MCF 10A (cell line): ENCODE measurements at regions of chr1 and their contacts with region 1.

Region 1: GRCh38 chr1:45359882-45360513 is 19.8 kb upstream of the MUTYH start:
- DNase-seq: peak; percentile 70
- H3K4me3 Mint-ChIP-seq: no peak overlapping the region
- H3K27ac Mint-ChIP-seq: no peak overlapping the region
- H3K4me1 Mint-ChIP-seq: peaks cover 15% of the 10 kb centered on the region
- H3K27me3 Mint-ChIP-seq: no peaks in the 10 kb centered on the region
- CTCF ChIP-seq: peak; percentile 64

Region 2: GRCh38 chr1:45339789-45340570 is 20.0 kb before region 1 on chr1 and contains the starts of genes MUTYH and TOE1:
- CTCF ChIA-PET with region 1: interaction called, 4 read pairs
- POLR2A ChIA-PET with region 1: interaction called, 17 read pairs
- intact Hi-C with region 1: no loop called
- DNase-seq: peak; percentile 89
- H3K4me3 Mint-ChIP-seq: peak within 1 kb of the TSS; percentile 93
- H3K27ac Mint-ChIP-seq: peak within 1 kb of the TSS; percentile 93
- H3K4me1 Mint-ChIP-seq: peaks cover 4% of the 10 kb centered on the region
- H3K27me3 Mint-ChIP-seq: no peaks in the 10 kb centered on the region
- CTCF ChIP-seq: no peak
- total RNA-seq, gene MUTYH: 31.2 and 31.3 TPM in 2 replicates
- total RNA-seq, gene TOE1: 11.1 and 13.3 TPM in 2 replicates

Region 3: DNA sequence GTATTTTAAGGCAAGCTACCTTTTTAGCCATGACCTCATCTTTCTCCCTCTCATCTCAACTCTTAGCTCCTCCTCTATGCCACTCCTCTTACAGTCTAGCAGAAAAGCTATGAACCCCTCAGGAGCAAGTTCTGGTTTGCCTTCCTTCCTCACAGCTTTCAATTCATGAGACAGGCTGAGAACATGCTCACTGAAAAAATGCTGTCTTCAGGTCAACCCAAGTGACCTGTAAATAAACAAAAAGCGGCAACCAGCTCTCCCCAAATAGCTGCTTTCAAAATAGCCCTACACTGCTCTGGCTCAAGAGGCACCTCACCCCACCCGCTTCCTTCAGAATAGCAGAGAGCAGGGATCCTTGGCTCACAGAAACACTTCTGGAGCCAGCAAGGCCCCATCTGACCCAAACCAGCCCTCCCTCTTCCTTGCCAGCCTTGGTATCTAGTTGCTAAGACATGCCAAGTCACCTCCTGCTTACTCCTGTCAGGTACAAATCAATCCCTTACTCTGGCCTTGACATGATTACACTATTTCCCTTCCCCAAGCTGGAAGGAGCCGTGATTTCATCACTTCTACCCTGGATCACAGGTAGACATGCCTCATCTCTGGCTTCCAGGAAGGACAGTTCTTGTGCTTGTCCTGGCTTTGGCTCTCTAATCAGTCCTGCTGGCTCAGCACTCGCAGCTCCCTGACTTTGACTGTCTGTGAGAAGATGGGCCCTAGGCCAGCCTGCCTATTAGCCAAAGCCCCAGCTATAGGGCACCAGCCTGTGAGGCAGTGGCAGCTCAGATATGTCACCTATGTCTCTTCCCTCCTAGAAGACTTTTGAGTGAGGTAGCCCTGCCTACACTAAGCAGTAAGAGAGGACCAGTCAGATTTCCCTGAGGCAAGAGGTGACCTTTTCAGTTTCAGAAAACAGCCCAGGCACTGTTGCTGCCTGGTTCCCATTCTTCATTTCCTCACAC is 11.0 kb before region 1 on chr1:
- CTCF ChIA-PET with region 1: interaction called, 33 read pairs
- POLR2A ChIA-PET with region 1: interaction called, 4 read pairs
- intact Hi-C with region 1: no loop called
- DNase-seq: peak; percentile 83
- H3K4me3 Mint-ChIP-seq: peak overlapping the region; percentile 28
- H3K27ac Mint-ChIP-seq: peak overlapping the region; percentile 52
- H3K4me1 Mint-ChIP-seq: peaks cover 21% of the 10 kb centered on the region
- H3K27me3 Mint-ChIP-seq: no peaks in the 10 kb centered on the region
- CTCF ChIP-seq: no peak

Region 4: GRCh38 chr1:45370575-45370974 is 10.6 kb after region 1 on chr1:
- CTCF ChIA-PET with region 1: interaction called, 11 read pairs
- POLR2A ChIA-PET with region 1: no interaction called
- intact Hi-C with region 1: no loop called
- DNase-seq: no peak
- H3K4me3 Mint-ChIP-seq: no peak overlapping the region
- H3K27ac Mint-ChIP-seq: no peak overlapping the region
- H3K4me1 Mint-ChIP-seq: no peaks in the 10 kb centered on the region
- H3K27me3 Mint-ChIP-seq: no peaks in the 10 kb centered on the region
- CTCF ChIP-seq: no peak

Region 5: GRCh38 chr1:45490626-45491486 is 130.9 kb after region 1 on chr1 and contains the start of gene TESK2:
- CTCF ChIA-PET with region 1: interaction called, 303 read pairs
- POLR2A ChIA-PET with region 1: interaction called, 28 read pairs
- intact Hi-C with region 1: loop called (anchors 1 kb)
- DNase-seq: peak; percentile 100
- H3K4me3 Mint-ChIP-seq: no peak within 1 kb of the TSS
- H3K27ac Mint-ChIP-seq: no peak within 1 kb of the TSS
- H3K4me1 Mint-ChIP-seq: peaks cover 5% of the 10 kb centered on the region
- H3K27me3 Mint-ChIP-seq: no peaks in the 10 kb centered on the region
- CTCF ChIP-seq: no peak
- total RNA-seq, gene TESK2: 0.71 and 1.4 TPM in 2 replicates

Region 6: GRCh38 chr1:45499415-45499769 is 139.4 kb after region 1 on chr1:
- CTCF ChIA-PET with region 1: interaction called, 303 read pairs
- POLR2A ChIA-PET with region 1: interaction called, 4 read pairs
- intact Hi-C with region 1: no loop called
- DNase-seq: no peak
- H3K4me3 Mint-ChIP-seq: peak overlapping the region; percentile 97
- H3K27ac Mint-ChIP-seq: peak overlapping the region; percentile 94
- H3K4me1 Mint-ChIP-seq: peaks cover 26% of the 10 kb centered on the region
- H3K27me3 Mint-ChIP-seq: no peaks in the 10 kb centered on the region
- CTCF ChIP-seq: no peak

Region 7: GRCh38 chr1:45583264-45583665 is 223.3 kb after region 1 on chr1:
- CTCF ChIA-PET with region 1: no interaction called
- POLR2A ChIA-PET with region 1: no interaction called
- intact Hi-C with region 1: no loop called
- DNase-seq: peak; percentile 97
- H3K4me3 Mint-ChIP-seq: peak overlapping the region; percentile 89
- H3K27ac Mint-ChIP-seq: peak overlapping the region; percentile 68
- H3K4me1 Mint-ChIP-seq: peaks cover 15% of the 10 kb centered on the region
- H3K27me3 Mint-ChIP-seq: no peaks in the 10 kb centered on the region
- CTCF ChIP-seq: no peak